ENCODE measurements at regions of chr11 and their contacts with region 1.

Region 1: DNA sequence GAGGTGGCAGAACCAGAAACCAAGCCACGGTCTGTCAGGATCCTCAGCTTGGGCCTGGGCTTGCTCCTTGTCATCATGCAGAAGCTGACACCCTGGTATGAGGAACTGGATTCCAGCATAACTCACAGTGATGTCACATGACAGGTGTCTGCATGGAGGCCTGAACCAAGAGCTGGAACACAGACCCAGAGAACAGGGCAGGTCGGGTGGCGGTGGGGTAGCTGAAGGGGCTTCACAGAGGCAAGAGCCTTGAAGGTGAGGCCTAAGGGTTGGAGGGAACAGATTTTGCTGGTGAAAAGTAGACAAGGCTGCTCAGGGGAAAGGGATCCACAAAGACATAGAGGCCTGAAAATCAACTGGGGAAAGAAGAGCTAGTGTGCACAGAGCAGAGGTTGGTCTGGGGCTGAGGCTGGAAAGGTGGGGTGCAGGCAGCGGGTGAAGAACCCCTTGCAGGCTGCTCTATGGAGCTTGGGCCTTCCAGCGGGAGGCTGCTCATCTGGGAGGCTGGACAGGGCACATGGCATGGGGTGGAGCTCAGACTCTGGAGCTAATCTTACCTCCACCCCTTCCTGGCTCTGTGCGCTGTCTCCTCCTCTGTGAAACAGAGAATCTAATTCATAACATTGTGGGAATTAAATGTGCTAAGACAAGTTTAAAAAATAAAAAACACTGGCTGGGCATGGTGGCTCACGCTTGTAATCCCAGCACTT is 18.5 kb upstream of the RPS3 start:
- DNase-seq: no peak
- ATAC-seq: no peak
- H3K4me3 ChIP-seq: no peak overlapping the region
- H3K4me3 Mint-ChIP-seq: no peak overlapping the region
- H3K27ac ChIP-seq: no peak overlapping the region
- H3K27ac Mint-ChIP-seq: peak overlapping the region; percentile 56
- H3K4me1 ChIP-seq: peaks cover 23% of the 10 kb centered on the region
- H3K4me1 Mint-ChIP-seq: peaks cover 20% of the 10 kb centered on the region
- H3K27me3 ChIP-seq: no peaks in the 10 kb centered on the region
- H3K27me3 Mint-ChIP-seq: no peaks in the 10 kb centered on the region
- CTCF ChIP-seq: no peak

Region 2: GRCh38 chr11:74299015-74299414 is 1081.9 kb before region 1 on chr11:
- CTCF ChIA-PET with region 1: no interaction called
- POLR2A ChIA-PET with region 1: no interaction called
- intact Hi-C with region 1: no loop called
- DNase-seq: no peak
- ATAC-seq: no peak
- H3K4me3 ChIP-seq: no peak overlapping the region
- H3K4me3 Mint-ChIP-seq: no peak overlapping the region
- H3K27ac ChIP-seq: no peak overlapping the region
- H3K27ac Mint-ChIP-seq: no peak overlapping the region
- H3K4me1 ChIP-seq: no peaks in the 10 kb centered on the region
- H3K4me1 Mint-ChIP-seq: peaks cover 5% of the 10 kb centered on the region
- H3K27me3 ChIP-seq: no peaks in the 10 kb centered on the region
- H3K27me3 Mint-ChIP-seq: peaks cover 26% of the 10 kb centered on the region
- CTCF ChIP-seq: no peak

Region 3: GRCh38 chr11:75351791-75352587 is 28.9 kb before region 1 on chr11:
- CTCF ChIA-PET with region 1: interaction called, 19 read pairs
- POLR2A ChIA-PET with region 1: interaction called, 8 read pairs
- intact Hi-C with region 1: loop called in 1 of 2 experiments (anchors 1 kb)
- DNase-seq: peak; percentile 30 to 83 (median 59)
- ATAC-seq: peak; percentile 67
- H3K4me3 ChIP-seq: peak overlapping the region; percentile 68 to 95
- H3K4me3 Mint-ChIP-seq: peak overlapping the region; percentile 93
- H3K27ac ChIP-seq: peak overlapping the region; percentile 63 to 74
- H3K27ac Mint-ChIP-seq: peak overlapping the region; percentile 89
- H3K4me1 ChIP-seq: peaks cover 60% of the 10 kb centered on the region
- H3K4me1 Mint-ChIP-seq: peaks cover 64% of the 10 kb centered on the region
- H3K27me3 ChIP-seq: no peaks in the 10 kb centered on the region
- H3K27me3 Mint-ChIP-seq: no peaks in the 10 kb centered on the region
- CTCF ChIP-seq: no peak

Measured in CD8-positive, alpha-beta T cell (primary cell).